ENCODE measurements at regions of chr17 and their contacts with region 1.

Region 1: GRCh38 chr17:8435245-8436168 is at the start of gene NDEL1:
- DNase-seq: peak; percentile 100
- H3K4me3 Mint-ChIP-seq: peak within 1 kb of the TSS; percentile 88
- H3K27ac Mint-ChIP-seq: peak within 1 kb of the TSS; percentile 94
- H3K4me1 Mint-ChIP-seq: peaks cover 24% of the 10 kb centered on the region
- H3K27me3 Mint-ChIP-seq: no peaks in the 10 kb centered on the region
- total RNA-seq, gene NDEL1: 72.8 and 74.3 TPM in 2 replicates

Region 2: GRCh38 chr17:8383143-8383822 is 52.2 kb before region 1 on chr17 and contains the start of gene RPL26:
- intact Hi-C with region 1: loop called (anchors 1 kb)
- DNase-seq: peak; percentile 98
- H3K4me3 Mint-ChIP-seq: peak within 1 kb of the TSS; percentile 99
- H3K27ac Mint-ChIP-seq: peak within 1 kb of the TSS; percentile 95
- H3K4me1 Mint-ChIP-seq: peaks cover 40% of the 10 kb centered on the region
- H3K27me3 Mint-ChIP-seq: no peaks in the 10 kb centered on the region
- total RNA-seq, gene RPL26: 2,460 and 2,469 TPM in 2 replicates

Region 3: GRCh38 chr17:8447799-8448198 is 12.3 kb after region 1 on chr17:
- intact Hi-C with region 1: no loop called
- DNase-seq: no peak
- H3K4me3 Mint-ChIP-seq: no peak overlapping the region
- H3K27ac Mint-ChIP-seq: no peak overlapping the region
- H3K4me1 Mint-ChIP-seq: peaks cover 8% of the 10 kb centered on the region
- H3K27me3 Mint-ChIP-seq: no peaks in the 10 kb centered on the region

Region 4: DNA sequence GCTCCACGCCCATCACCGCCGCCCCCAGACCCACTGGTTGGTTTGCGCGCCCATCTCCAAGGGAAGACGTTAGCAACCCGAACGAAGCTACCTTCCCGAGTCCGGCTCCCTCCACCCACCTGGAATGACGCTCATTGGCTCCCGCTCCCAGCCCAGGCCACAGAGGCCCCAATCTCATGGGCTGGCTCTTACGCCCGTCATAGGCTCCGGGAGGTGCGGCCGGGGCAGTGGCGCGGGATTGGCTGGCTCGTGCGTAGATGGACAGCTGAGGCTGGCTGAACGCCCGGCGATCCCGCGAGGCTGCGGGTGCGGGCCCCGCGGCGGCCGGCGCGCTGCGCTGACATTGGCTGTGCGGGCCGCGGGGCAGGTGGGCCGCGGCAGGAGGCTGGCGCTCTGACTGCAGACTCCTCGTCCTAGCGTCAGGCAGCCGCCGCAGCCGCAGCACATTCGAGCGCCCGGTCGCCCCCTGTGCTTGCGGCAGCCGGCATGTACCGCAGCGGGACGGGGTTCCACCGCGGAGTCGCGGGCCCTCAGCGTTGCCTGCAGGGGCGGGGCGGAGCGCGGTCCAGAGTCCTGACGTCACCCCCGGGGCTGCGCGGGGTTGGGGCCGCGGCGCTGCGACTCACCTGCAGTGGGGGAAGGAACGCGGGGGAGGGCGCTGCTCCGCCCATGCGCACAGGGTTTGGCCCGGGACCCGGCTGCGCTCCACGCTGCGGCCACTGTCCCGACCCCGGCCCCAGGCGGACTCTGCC is 195.5 kb after region 1 on chr17:
- intact Hi-C with region 1: loop called (anchors 5 kb)
- DNase-seq: peak; percentile 97
- H3K4me3 Mint-ChIP-seq: peak overlapping the region; percentile 93
- H3K27ac Mint-ChIP-seq: peak overlapping the region; percentile 78
- H3K4me1 Mint-ChIP-seq: peaks cover 16% of the 10 kb centered on the region
- H3K27me3 Mint-ChIP-seq: peaks cover 59% of the 10 kb centered on the region